OCI-LY7 (cell line): ENCODE measurements at regions of chr12 and their contacts with region 1.

Region 1: GRCh38 chr12:118372541-118373495 is at the start of gene TAOK3:
- DNase-seq: peak; percentile 98
- H3K4me3 ChIP-seq: peak within 1 kb of the TSS; percentile 97
- H3K27ac ChIP-seq: no peak within 1 kb of the TSS
- H3K4me1 ChIP-seq: peaks cover 27% of the 10 kb centered on the region
- CTCF ChIP-seq: no peak
- total RNA-seq, gene TAOK3: 30.7 and 48.4 TPM in 2 replicates

Region 2: GRCh38 chr12:118120579-118121363 is 252.0 kb before region 1 on chr12:
- CTCF ChIA-PET with region 1: interaction called, 8 read pairs
- POLR2A ChIA-PET with region 1: no interaction called
- intact Hi-C with region 1: loop called (anchors 1 kb)
- DNase-seq: peak; percentile 76
- H3K4me3 ChIP-seq: no peak overlapping the region
- H3K27ac ChIP-seq: no peak overlapping the region
- H3K4me1 ChIP-seq: peaks cover 5% of the 10 kb centered on the region
- CTCF ChIP-seq: peak; percentile 70

Region 3: GRCh38 chr12:118164798-118165486 is 207.9 kb before region 1 on chr12:
- CTCF ChIA-PET with region 1: interaction called, 3 read pairs
- POLR2A ChIA-PET with region 1: interaction called, 3 read pairs
- intact Hi-C with region 1: loop called (anchors 1 kb)
- DNase-seq: peak; percentile 15
- H3K4me3 ChIP-seq: no peak overlapping the region
- H3K27ac ChIP-seq: no peak overlapping the region
- H3K4me1 ChIP-seq: peaks cover 6% of the 10 kb centered on the region
- CTCF ChIP-seq: peak; percentile 77

Region 4: GRCh38 chr12:118237052-118237665 is 135.7 kb before region 1 on chr12:
- CTCF ChIA-PET with region 1: no interaction called
- POLR2A ChIA-PET with region 1: no interaction called
- intact Hi-C with region 1: loop called (anchors 5 kb)
- DNase-seq: peak; percentile 75
- H3K4me3 ChIP-seq: peak overlapping the region; percentile 36
- H3K27ac ChIP-seq: peak overlapping the region; percentile 90
- H3K4me1 ChIP-seq: peaks cover 46% of the 10 kb centered on the region
- CTCF ChIP-seq: no peak